PC-3 (cell line): ENCODE measurements at regions of chr10 and their contacts with region 1.

Region 1: GRCh38 chr10:11602919-11603523 is 8.4 kb downstream of the USP6NL start:
- DNase-seq: peak; percentile 51
- ATAC-seq: peak; percentile 79
- H3K4me3 ChIP-seq: no peak overlapping the region; the same call in 1 of the 2 replicates
- H3K27ac ChIP-seq: peak overlapping the region; percentile 18; the same call in 1 of the 2 replicates
- H3K4me1 ChIP-seq: peaks cover 14% of the 10 kb centered on the region
- H3K27me3 ChIP-seq: no peaks in the 10 kb centered on the region
- CTCF ChIP-seq: no peak

Region 2: GRCh38 chr10:11539191-11539868 is 63.7 kb before region 1 on chr10:
- CTCF ChIA-PET with region 1: no interaction called
- POLR2A ChIA-PET with region 1: no interaction called
- intact Hi-C with region 1: loop called (anchors 5 kb)
- DNase-seq: peak; percentile 59
- ATAC-seq: peak; percentile 93
- H3K4me3 ChIP-seq: no peak overlapping the region
- H3K27ac ChIP-seq: peak overlapping the region; percentile 70
- H3K4me1 ChIP-seq: peaks cover 18% of the 10 kb centered on the region
- H3K27me3 ChIP-seq: no peaks in the 10 kb centered on the region
- CTCF ChIP-seq: no peak